CD8-positive, alpha-beta T cell (primary cell): ENCODE measurements at regions of chr21 and their contacts with region 1.

Region 1: GRCh38 chr21:32834916-32835235 is 63.3 kb upstream of the PAXBP1 start:
- DNase-seq: no peak
- ATAC-seq: no peak
- H3K4me3 ChIP-seq: no peak overlapping the region
- H3K4me3 Mint-ChIP-seq: no peak overlapping the region
- H3K27ac ChIP-seq: no peak overlapping the region
- H3K27ac Mint-ChIP-seq: no peak overlapping the region
- H3K4me1 ChIP-seq: no peaks in the 10 kb centered on the region
- H3K4me1 Mint-ChIP-seq: no peaks in the 10 kb centered on the region
- H3K27me3 ChIP-seq: peaks cover 0 to 2% of the 10 kb centered on the region in 2 experiments
- H3K27me3 Mint-ChIP-seq: no peaks in the 10 kb centered on the region
- CTCF ChIP-seq: no peak

Region 2: GRCh38 chr21:33127154-33127893 is 292.4 kb after region 1 on chr21:
- CTCF ChIA-PET with region 1: interaction called, 7 read pairs
- POLR2A ChIA-PET with region 1: interaction called, 3 read pairs
- intact Hi-C with region 1: loop called (anchors 2 kb)
- DNase-seq: peak; percentile 10 to 74 (median 61)
- ATAC-seq: peak; percentile 38
- H3K4me3 ChIP-seq: peak overlapping the region; percentile 22 to 32
- H3K4me3 Mint-ChIP-seq: peak overlapping the region; percentile 74
- H3K27ac ChIP-seq: no peak overlapping the region
- H3K27ac Mint-ChIP-seq: no peak overlapping the region
- H3K4me1 ChIP-seq: no peaks in the 10 kb centered on the region
- H3K4me1 Mint-ChIP-seq: peaks cover 9% of the 10 kb centered on the region
- H3K27me3 ChIP-seq: peaks cover 0 to 3% of the 10 kb centered on the region in 2 experiments
- H3K27me3 Mint-ChIP-seq: peaks cover 26% of the 10 kb centered on the region
- CTCF ChIP-seq: peak; percentile 56

Region 3: DNA sequence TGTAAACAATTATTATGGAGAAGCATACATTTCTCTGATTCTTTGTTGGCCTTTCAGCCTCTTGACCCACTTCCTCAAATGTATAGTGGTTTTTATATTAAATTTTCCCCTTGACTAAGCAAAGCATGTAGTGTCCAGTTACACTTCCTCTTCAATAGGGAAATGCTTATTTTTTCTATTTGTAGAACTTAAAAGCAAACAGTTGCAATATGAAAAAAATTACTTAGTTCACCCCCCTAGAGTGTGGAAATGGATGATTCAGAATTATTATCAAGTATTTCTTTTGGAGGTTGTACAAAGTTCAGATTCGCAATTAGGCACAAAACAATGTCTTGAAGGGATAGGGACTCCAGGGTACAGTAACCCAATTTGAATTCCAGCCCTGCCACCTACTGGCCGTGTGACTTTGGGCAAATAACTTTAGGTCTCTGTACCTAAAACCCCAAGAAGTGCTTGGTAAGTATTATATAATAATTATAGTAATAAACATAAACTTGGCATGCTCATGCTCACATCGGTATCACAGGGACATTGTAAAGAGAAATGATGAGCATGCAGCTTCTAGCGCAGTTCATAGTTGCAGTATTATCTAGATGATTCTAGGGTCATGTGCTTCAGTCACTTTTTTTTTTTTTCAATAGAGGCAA is 539.7 kb after region 1 on chr21:
- CTCF ChIA-PET with region 1: no interaction called
- POLR2A ChIA-PET with region 1: no interaction called
- intact Hi-C with region 1: loop called in 1 of 2 experiments (anchors 5 kb)
- DNase-seq: peak in 7 of 9 experiments; percentile 38 to 75 (median 67)
- ATAC-seq: peak; percentile 85
- H3K4me3 ChIP-seq: no peak overlapping the region
- H3K4me3 Mint-ChIP-seq: no peak overlapping the region
- H3K27ac ChIP-seq: no peak overlapping the region
- H3K27ac Mint-ChIP-seq: no peak overlapping the region
- H3K4me1 ChIP-seq: peaks cover 9% of the 10 kb centered on the region
- H3K4me1 Mint-ChIP-seq: peaks cover 12% of the 10 kb centered on the region
- H3K27me3 ChIP-seq: peaks cover 0 to 13% of the 10 kb centered on the region in 2 experiments
- H3K27me3 Mint-ChIP-seq: peaks cover 3% of the 10 kb centered on the region
- CTCF ChIP-seq: peak; percentile 66

Region 4: GRCh38 chr21:33449616-33450015 is 614.7 kb after region 1 on chr21:
- CTCF ChIA-PET with region 1: interaction called, 9 read pairs
- POLR2A ChIA-PET with region 1: no interaction called
- intact Hi-C with region 1: loop called (anchors 2 to 5 kb)
- DNase-seq: no peak
- ATAC-seq: no peak
- H3K4me3 ChIP-seq: no peak overlapping the region
- H3K4me3 Mint-ChIP-seq: no peak overlapping the region
- H3K27ac ChIP-seq: no peak overlapping the region
- H3K27ac Mint-ChIP-seq: no peak overlapping the region
- H3K4me1 ChIP-seq: no peaks in the 10 kb centered on the region
- H3K4me1 Mint-ChIP-seq: peaks cover 3% of the 10 kb centered on the region
- H3K27me3 ChIP-seq: no peaks in the 10 kb centered on the region
- H3K27me3 Mint-ChIP-seq: no peaks in the 10 kb centered on the region
- CTCF ChIP-seq: no peak